Dorsolateral prefrontal cortex (tissue), 120 donors: ENCODE measurements at regions of chr1 and their contacts with region 1.

Region 1: DNA sequence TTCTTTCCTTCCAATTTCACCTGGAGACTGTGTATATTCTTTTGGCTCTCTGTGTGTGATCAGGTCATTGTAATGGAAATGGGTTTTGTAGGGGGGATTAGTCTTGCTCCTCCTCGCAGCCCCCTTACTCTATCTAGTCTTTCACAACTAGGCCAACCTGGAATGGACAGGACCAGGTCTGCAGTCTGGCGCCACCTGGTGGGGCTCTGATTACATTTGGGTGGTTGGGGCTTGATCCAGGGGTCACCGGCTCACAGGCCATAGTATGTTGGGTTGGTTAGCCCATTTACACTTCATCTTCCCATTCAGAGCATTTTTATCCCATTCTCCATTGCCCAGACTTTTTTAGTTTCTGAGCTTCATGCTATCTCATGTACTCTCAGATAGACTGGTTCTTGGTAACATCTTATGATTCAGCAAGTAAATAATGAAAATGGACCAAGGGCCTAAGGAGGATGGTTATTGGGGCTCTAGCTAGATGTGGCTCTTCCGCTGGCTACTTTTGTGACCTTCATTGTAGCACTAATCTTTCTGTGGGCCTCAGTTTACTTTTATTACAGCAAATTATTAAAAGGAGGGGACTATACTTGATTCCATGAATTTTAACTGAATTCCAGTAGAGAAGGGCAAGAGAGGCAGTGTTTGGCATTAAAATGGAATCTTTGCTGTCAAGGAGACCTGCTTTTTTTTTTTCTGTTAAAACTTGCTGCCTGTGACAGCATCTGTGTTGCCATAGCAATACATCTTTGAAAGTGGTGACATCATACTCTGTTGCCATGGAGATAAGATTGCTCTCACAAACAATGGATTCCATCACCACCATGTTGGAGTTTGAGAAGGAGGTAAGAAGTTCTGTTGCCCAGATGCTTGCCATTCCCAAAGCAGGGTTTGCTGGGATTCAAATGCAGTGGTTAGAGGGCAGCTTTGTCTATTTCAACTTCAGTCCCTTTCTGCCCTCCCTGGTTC is 150.1 kb downstream of the PLXNA2 start:
- DNase-seq: peak in 5 of 10 donors; percentile 47 to 70 (median 68)
- H3K4me3 ChIP-seq: no peak overlapping the region
- H3K27ac ChIP-seq: no peak overlapping the region
- H3K27me3 ChIP-seq: no peaks in the 10 kb centered on the region
- CTCF ChIP-seq: peak; percentile 26 to 83 (median 68)

Region 2: GRCh38 chr1:207997486-207998268 is 96.4 kb before region 1 on chr1:
- intact Hi-C with region 1: no loop called
- DNase-seq: peak; percentile 49 to 78 (median 65)
- H3K4me3 ChIP-seq: no peak overlapping the region
- H3K27ac ChIP-seq: no peak overlapping the region
- H3K27me3 ChIP-seq: peaks cover 0 to 5% (median 0%) of the 10 kb centered on the region in 45 donors
- CTCF ChIP-seq: peak; percentile 46 to 89 (median 79)

Region 3: GRCh38 chr1:208024406-208024805 is 69.6 kb before region 1 on chr1:
- intact Hi-C with region 1: loop called (anchors 5 to 10 kb)
- DNase-seq: no peak
- H3K4me3 ChIP-seq: no peak overlapping the region
- H3K27ac ChIP-seq: peak overlapping the region in 18 of 59 donors; percentile 10 to 75 (median 36)
- H3K27me3 ChIP-seq: peaks cover 0 to 6% (median 0%) of the 10 kb centered on the region in 45 donors
- CTCF ChIP-seq: no peak

Region 4: GRCh38 chr1:208029381-208030287 is 64.4 kb before region 1 on chr1:
- intact Hi-C with region 1: loop called (anchors 5 to 10 kb)
- DNase-seq: no peak
- H3K4me3 ChIP-seq: no peak overlapping the region
- H3K27ac ChIP-seq: peak overlapping the region in 56 of 59 donors; percentile 30 to 96 (median 80)
- H3K27me3 ChIP-seq: peaks cover 0 to 11% (median 0%) of the 10 kb centered on the region in 45 donors
- CTCF ChIP-seq: no peak

Region 5: DNA sequence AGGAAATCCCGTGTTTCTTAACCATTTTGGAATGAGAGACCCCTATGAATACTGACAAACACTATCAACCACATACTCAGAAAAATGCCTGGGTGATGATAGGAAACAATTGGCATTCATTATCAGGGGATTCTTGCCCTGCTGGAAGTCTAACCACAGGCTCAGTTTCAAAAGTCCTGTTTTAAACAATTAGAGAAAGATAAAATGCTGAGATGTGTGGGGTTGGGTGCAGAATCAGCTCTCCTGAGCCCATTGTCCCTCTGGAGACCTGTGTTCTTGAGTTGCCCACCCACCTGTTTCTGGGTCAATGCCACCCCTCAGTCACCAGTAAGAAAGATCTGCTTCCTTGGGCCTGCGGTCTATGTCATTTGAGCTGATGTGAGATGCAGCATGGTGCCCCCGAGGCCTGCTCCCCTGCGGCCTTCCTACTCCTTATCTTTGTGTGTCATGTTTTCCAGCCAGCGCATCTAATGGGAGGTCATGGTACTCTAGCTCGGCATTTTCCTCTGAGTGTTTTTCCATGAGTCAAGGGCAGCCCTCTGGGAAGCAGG is 280.4 kb after region 1 on chr1:
- intact Hi-C with region 1: no loop called
- DNase-seq: no peak
- H3K4me3 ChIP-seq: no peak overlapping the region
- H3K27ac ChIP-seq: no peak overlapping the region
- H3K27me3 ChIP-seq: peaks cover 0 to 8% (median 0%) of the 10 kb centered on the region in 45 donors
- CTCF ChIP-seq: no peak

Region 6: DNA sequence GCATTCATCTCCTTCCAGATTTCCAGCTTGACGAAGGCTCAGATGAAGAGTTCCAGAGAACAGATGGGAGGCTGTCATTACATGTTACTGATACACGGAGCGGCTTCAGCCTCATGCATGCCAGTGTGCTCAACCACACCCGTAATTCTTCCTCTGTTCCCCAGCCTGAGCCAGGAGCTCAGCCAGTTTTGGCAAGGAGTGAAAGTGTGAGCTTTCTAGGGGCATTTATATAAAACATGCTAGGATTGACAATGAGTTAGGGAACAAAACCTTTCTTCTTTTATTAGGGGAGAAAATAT is 440.5 kb after region 1 on chr1:
- intact Hi-C with region 1: no loop called
- DNase-seq: peak in 2 of 10 donors; percentile 44 to 83
- H3K4me3 ChIP-seq: no peak overlapping the region
- H3K27ac ChIP-seq: peak overlapping the region in 18 of 59 donors; percentile 1 to 82 (median 46)
- H3K27me3 ChIP-seq: peaks cover 0 to 6% (median 0%) of the 10 kb centered on the region in 45 donors
- CTCF ChIP-seq: no peak

Region 7: DNA sequence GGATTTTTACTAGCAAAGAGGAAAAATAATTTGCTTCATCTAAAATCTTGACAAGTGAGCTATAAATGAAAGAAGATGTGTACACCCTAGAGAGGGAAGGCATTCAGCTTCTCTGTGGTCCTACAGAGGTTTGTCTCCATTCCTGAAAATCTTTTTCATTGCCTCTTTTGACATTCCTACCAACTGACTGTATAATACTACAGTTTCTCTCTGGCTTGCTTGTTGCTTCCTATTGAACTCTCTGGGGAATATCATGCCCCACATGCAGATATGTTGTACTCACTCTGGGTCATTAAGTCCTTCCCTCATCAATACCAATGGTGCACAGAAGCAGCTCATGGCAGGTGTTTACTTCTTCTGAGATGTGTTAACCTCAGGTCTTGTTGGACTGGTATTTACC is 521.3 kb after region 1 on chr1:
- intact Hi-C with region 1: no loop called
- DNase-seq: no peak
- H3K4me3 ChIP-seq: no peak overlapping the region
- H3K27ac ChIP-seq: no peak overlapping the region
- H3K27me3 ChIP-seq: no peaks in the 10 kb centered on the region
- CTCF ChIP-seq: no peak